Endothelial cell of umbilical vein (primary cell): ENCODE measurements at regions of chr3 and their contacts with region 1.

Region 1: DNA sequence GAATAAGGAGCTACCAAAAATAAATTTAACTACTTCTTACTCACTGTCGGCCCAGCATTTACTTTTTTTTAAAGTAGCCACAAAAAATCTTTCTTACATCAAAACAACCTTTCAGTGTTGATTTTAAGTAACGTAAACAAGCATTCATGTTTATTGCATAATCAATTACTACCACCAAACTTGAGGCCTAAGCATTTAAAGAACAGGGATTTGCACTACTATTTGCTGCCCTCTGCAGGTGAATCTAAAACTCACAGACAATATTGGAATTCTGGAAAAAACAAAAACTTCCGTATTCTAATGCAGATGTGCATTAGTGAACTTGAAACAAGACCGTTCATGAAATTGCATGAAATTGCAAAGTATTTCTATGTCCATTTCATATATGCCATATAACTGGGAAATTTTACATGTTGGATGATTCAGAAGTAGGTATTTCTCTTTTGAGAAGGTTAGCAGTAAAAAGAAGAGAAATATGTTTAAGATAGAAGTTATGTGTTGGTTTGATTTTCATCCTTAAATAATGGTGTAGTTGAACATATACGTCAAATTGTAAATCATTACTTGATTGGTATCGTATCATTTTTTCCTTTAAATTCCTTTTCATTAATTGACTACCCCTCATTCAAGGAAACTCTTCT is 55.6 kb downstream of the CGGBP1 start:
- DNase-seq: peak; percentile 64
- H3K4me3 ChIP-seq: no peak overlapping the region
- H3K27ac ChIP-seq: no peak overlapping the region
- H3K4me1 ChIP-seq: peaks cover 2% of the 10 kb centered on the region
- H3K27me3 ChIP-seq: peaks cover 0 to 7% of the 10 kb centered on the region in 2 experiments
- CTCF ChIP-seq: peak; percentile 55
- POLR2A ChIP-seq: no peak

Region 2: DNA sequence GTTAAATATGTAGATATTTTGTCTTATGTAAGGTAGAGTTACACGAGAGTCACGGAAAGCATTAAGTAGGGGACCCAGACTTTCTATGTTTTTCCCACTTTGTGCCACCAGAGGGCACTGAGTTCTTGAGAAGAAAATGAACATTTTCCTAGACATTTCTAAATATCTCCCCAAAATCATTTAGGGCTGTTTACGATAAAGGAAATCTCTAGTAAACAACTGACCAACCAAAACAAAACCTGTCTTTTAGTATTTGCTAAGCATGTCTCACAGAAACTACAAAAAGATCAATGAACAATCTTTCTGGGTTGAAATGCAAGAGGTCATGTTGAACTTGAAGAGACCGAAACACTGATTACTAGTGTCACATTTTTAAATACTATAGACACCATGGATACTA is 743.0 kb before region 1 on chr3:
- CTCF ChIA-PET with region 1: interaction called, 83 read pairs
- POLR2A ChIA-PET with region 1: no interaction called
- dilution Hi-C with region 1: no loop called
- intact Hi-C with region 1: loop called (anchors 1 kb)
- DNase-seq: peak; percentile 66
- H3K4me3 ChIP-seq: no peak overlapping the region
- H3K27ac ChIP-seq: no peak overlapping the region
- H3K4me1 ChIP-seq: no peaks in the 10 kb centered on the region
- H3K27me3 ChIP-seq: no peaks in the 10 kb centered on the region
- CTCF ChIP-seq: peak; percentile 53 to 59
- POLR2A ChIP-seq: no peak

Region 3: DNA sequence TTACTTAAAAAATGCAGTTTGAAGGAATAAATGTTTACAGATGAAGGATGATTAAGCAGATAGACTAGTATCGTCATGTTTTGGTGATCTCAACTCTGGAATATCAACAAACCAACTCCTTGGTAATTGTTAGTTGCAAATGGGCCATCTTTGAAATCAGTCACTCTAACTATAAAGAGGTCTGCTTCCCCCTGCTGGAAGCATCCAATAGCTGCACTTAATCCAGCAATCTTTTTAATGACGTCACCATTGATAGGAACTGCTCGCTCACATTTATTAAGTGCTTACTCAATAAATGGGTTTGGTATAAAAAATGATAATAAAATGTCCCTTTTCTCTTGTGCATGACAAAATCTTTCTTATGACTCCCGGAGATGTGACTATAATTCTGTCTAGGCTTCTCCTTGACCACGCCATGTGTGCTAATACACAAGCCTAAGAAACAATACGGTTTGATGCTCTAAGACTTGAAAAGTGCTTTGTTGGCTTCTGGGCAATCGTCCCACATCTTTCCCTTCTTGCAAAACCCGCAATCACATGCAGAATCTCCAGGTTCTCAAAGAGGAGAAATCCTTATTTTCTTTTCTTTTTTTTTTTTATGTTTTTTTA is 499.2 kb before region 1 on chr3:
- CTCF ChIA-PET with region 1: interaction called, 9 read pairs
- POLR2A ChIA-PET with region 1: no interaction called
- dilution Hi-C with region 1: no loop called
- intact Hi-C with region 1: loop called (anchors 1 kb)
- DNase-seq: peak; percentile 85
- H3K4me3 ChIP-seq: no peak overlapping the region
- H3K27ac ChIP-seq: no peak overlapping the region
- H3K4me1 ChIP-seq: no peaks in the 10 kb centered on the region
- H3K27me3 ChIP-seq: peaks cover 0 to 2% of the 10 kb centered on the region in 2 experiments
- CTCF ChIP-seq: peak; percentile 66 to 67
- POLR2A ChIP-seq: no peak

Region 4: DNA sequence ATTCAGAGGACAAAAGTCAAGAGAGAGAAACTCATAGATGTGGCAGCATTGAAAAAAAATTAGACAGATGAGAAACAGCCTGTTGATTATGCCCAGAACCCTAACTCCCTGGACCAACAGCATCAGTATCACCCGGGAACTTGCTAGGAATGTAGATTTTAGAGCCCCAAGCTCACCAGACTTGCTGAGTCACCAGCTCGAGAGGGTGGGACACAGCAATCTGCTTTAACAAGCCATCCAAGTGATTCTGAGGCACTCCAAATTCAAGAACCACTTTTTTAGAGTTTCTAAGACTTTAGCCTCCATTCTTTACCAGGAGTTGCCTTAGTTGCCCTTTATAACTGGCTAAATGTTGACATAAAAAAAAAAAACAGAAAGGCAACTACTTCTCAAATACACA is 15.3 kb before region 1 on chr3:
- CTCF ChIA-PET with region 1: interaction called, 11 read pairs
- POLR2A ChIA-PET with region 1: no interaction called
- dilution Hi-C with region 1: no loop called
- intact Hi-C with region 1: no loop called
- DNase-seq: no peak
- H3K4me3 ChIP-seq: no peak overlapping the region
- H3K27ac ChIP-seq: no peak overlapping the region
- H3K4me1 ChIP-seq: no peaks in the 10 kb centered on the region
- H3K27me3 ChIP-seq: peaks cover 0 to 1% of the 10 kb centered on the region in 2 experiments
- CTCF ChIP-seq: no peak
- POLR2A ChIP-seq: no peak

Region 5: GRCh38 chr3:88044411-88044810 is 41.2 kb after region 1 on chr3:
- CTCF ChIA-PET with region 1: interaction called, 15 read pairs
- POLR2A ChIA-PET with region 1: no interaction called
- dilution Hi-C with region 1: no loop called
- intact Hi-C with region 1: no loop called
- DNase-seq: peak; percentile 83
- H3K4me3 ChIP-seq: no peak overlapping the region
- H3K27ac ChIP-seq: peak overlapping the region; percentile 21
- H3K4me1 ChIP-seq: peaks cover 28% of the 10 kb centered on the region
- H3K27me3 ChIP-seq: no peaks in the 10 kb centered on the region
- CTCF ChIP-seq: no peak
- POLR2A ChIP-seq: no peak

Region 6: GRCh38 chr3:88180398-88180999 is 177.3 kb after region 1 on chr3:
- CTCF ChIA-PET with region 1: interaction called, 11 read pairs
- POLR2A ChIA-PET with region 1: no interaction called
- dilution Hi-C with region 1: no loop called
- intact Hi-C with region 1: loop called (anchors 2 kb)
- DNase-seq: peak; percentile 48
- H3K4me3 ChIP-seq: no peak overlapping the region
- H3K27ac ChIP-seq: no peak overlapping the region
- H3K4me1 ChIP-seq: no peaks in the 10 kb centered on the region
- H3K27me3 ChIP-seq: no peaks in the 10 kb centered on the region
- CTCF ChIP-seq: peak; percentile 8 to 17
- POLR2A ChIP-seq: no peak